HepG2 (cell line): ENCODE measurements at regions of chr6 and their contacts with region 1.

Region 1: DNA sequence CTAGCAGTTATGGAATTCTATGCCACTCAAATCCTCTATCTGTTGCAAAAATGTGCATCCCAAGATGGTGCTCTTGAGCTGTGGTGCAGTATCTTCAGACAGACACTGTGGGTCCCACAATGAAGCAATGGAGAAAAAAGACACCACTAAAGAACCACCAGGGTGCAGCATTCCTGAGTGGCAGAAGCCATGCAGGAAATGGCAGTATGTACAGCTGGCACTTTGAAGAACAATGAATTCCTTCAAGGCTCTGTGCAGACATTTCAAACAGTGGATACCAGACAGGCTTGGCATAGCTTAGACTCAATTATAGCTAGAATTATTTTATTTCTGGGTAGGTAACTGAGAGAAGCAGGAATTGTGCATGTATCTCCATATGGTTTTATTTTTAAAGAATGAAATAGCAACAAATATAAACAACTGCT is 24.0 kb upstream of the HDAC2 start:
- DNase-seq: peak; percentile 87
- ATAC-seq: peak; percentile 99
- H3K4me3 ChIP-seq: no peak overlapping the region
- H3K27ac ChIP-seq: no peak overlapping the region
- H3K4me1 ChIP-seq: peaks cover 13% of the 10 kb centered on the region
- H3K27me3 ChIP-seq: no peaks in the 10 kb centered on the region
- CTCF ChIP-seq: peak; percentile 92
- EP300 ChIP-seq: 0 out of 4 replicates have a peak, but pooled peaks of 1 of the 2 experiments have one; percentile 16
- POLR2A ChIP-seq: no peak
- RAD21 ChIP-seq: peak; percentile 91

Region 2: GRCh38 chr6:114108119-114109002 is 113.4 kb after region 1 on chr6:
- CTCF ChIA-PET with region 1: interaction called, 3 read pairs
- POLR2A ChIA-PET with region 1: no interaction called
- in situ Hi-C with region 1: no loop called
- intact Hi-C with region 1: loop called (anchors 1 kb)
- DNase-seq: peak; percentile 63
- ATAC-seq: peak; percentile 92
- H3K4me3 ChIP-seq: no peak overlapping the region
- H3K27ac ChIP-seq: no peak overlapping the region
- H3K4me1 ChIP-seq: peaks cover 10% of the 10 kb centered on the region
- H3K27me3 ChIP-seq: no peaks in the 10 kb centered on the region
- CTCF ChIP-seq: peak; percentile 71
- EP300 ChIP-seq: no peak
- POLR2A ChIP-seq: no peak
- RAD21 ChIP-seq: peak; percentile 18; the same call in 1 of the 2 replicates

Region 3: GRCh38 chr6:114342826-114343780 is 348.2 kb after region 1 on chr6 and contains the start of gene HS3ST5:
- CTCF ChIA-PET with region 1: no interaction called
- POLR2A ChIA-PET with region 1: interaction called, 3 read pairs
- in situ Hi-C with region 1: loop called (anchors 25 kb)
- intact Hi-C with region 1: loop called (anchors 2 kb)
- DNase-seq: peak; percentile 57
- ATAC-seq: peak; percentile 94
- H3K4me3 ChIP-seq: peak within 1 kb of the TSS; percentile 61 to 90 (median 90)
- H3K27ac ChIP-seq: peak within 1 kb of the TSS; percentile 52
- H3K4me1 ChIP-seq: peaks cover 33% of the 10 kb centered on the region
- H3K27me3 ChIP-seq: no peaks in the 10 kb centered on the region; a peak in 2 of 5 replicates
- CTCF ChIP-seq: peak; percentile 89
- EP300 ChIP-seq: no peak
- POLR2A ChIP-seq: peak in 1 of 2 experiments; percentile 47; a peak in 2 of 4 replicates
- RAD21 ChIP-seq: peak; percentile 69
- total RNA-seq, gene HS3ST5: 1.0 and 1.1 TPM in 2 replicates

Region 4: DNA sequence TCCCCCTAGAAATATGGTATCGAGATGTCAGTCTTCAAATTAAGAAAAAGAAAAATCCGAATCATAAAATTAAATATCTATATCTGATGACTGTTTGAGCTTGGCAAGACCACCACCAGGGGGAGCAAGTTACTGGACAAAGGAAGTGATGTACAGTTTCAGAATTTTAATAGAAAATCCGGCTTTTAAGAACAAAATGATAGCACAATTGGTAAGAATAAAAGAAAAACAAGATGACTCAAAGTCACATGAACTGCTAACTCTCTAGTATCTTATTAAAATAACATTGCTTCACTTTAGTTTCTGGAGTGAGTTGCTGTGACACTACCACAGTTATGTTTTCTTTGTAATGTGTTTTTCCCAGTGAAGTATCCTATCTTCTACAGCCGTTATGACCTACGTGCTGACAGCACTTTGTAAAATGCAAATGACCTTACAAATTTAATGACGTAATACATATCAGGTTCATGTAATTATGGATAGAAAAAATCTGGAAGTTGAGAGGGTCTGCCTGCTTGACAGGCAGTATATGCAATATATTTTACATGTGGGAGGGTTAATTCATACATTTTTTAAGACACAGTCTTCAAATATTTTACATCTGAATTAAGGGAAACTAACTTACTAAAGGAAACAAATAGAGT is 753.2 kb after region 1 on chr6:
- CTCF ChIA-PET with region 1: no interaction called
- POLR2A ChIA-PET with region 1: no interaction called
- in situ Hi-C with region 1: no loop called
- intact Hi-C with region 1: loop called (anchors 5 kb)
- DNase-seq: peak; percentile 21
- ATAC-seq: no peak
- H3K4me3 ChIP-seq: no peak overlapping the region
- H3K27ac ChIP-seq: no peak overlapping the region
- H3K4me1 ChIP-seq: no peaks in the 10 kb centered on the region
- H3K27me3 ChIP-seq: no peaks in the 10 kb centered on the region; a peak in 1 of 5 replicates
- CTCF ChIP-seq: peak; percentile 47
- EP300 ChIP-seq: no peak
- POLR2A ChIP-seq: no peak
- RAD21 ChIP-seq: no peak

Region 5: GRCh38 chr6:115896538-115897129 is 1901.7 kb after region 1 on chr6:
- CTCF ChIA-PET with region 1: no interaction called
- POLR2A ChIA-PET with region 1: no interaction called
- in situ Hi-C with region 1: loop called (anchors 25 kb)
- intact Hi-C with region 1: no loop called
- DNase-seq: peak; percentile 14
- ATAC-seq: peak; percentile 73
- H3K4me3 ChIP-seq: no peak overlapping the region
- H3K27ac ChIP-seq: no peak overlapping the region
- H3K4me1 ChIP-seq: peaks cover 8% of the 10 kb centered on the region
- H3K27me3 ChIP-seq: no peaks in the 10 kb centered on the region; a peak in 1 of 5 replicates
- CTCF ChIP-seq: peak; percentile 68
- EP300 ChIP-seq: no peak
- POLR2A ChIP-seq: no peak
- RAD21 ChIP-seq: peak; percentile 29; the same call in 1 of the 2 replicates